WTC11 (cell line): ENCODE measurements at regions of chr15 and their contacts with region 1.

Region 1: GRCh38 chr15:97248376-97248775 is 712.1 kb upstream of the ARRDC4 start:
- DNase-seq: no peak
- ATAC-seq: no peak
- H3K4me3 Mint-ChIP-seq: no peak overlapping the region
- H3K27ac Mint-ChIP-seq: no peak overlapping the region
- H3K4me1 Mint-ChIP-seq: no peaks in the 10 kb centered on the region
- H3K27me3 Mint-ChIP-seq: no peaks in the 10 kb centered on the region
- CTCF ChIP-seq: no peak

Region 2: DNA sequence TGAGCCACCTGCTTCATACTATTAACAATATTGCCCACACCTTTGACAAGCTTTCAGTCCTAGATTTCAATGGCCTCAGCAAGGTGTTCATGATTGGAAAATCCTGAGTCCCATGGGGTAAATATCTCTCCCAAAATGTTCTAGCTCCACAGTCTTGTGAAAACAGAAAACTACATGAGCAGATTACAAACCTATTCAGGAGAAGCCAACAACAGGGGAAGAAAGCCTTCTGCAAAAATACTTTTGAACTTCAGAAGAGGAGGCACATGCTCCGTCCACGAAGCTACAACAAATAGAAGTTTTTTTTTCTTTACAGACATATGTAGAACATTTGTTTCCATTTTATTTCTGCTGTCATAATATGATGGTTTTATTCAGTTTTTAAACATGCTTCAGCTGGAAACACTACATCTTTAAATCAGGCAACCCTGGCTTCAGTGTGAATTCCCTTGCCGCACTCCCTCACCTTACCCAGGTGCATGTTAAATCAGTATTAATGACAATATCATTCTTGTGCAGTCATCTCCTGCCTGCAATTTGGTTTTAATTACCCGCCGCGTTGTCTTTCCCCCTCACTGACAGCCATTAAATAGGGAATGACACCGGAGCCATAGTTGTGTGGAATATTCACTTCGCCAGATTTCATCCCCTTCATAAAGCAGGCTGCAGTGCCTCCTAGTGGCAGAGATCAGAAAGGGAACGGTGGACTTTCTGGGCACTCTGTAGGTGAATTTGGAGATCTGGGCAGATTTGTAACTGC is 13.3 kb before region 1 on chr15:
- CTCF ChIA-PET with region 1: interaction called, 13 read pairs
- POLR2A ChIA-PET with region 1: no interaction called
- DNase-seq: peak; percentile 69
- ATAC-seq: peak; percentile 86
- H3K4me3 Mint-ChIP-seq: no peak overlapping the region
- H3K27ac Mint-ChIP-seq: no peak overlapping the region
- H3K4me1 Mint-ChIP-seq: peaks cover 2% of the 10 kb centered on the region
- H3K27me3 Mint-ChIP-seq: no peaks in the 10 kb centered on the region
- CTCF ChIP-seq: peak; percentile 89

Region 3: DNA sequence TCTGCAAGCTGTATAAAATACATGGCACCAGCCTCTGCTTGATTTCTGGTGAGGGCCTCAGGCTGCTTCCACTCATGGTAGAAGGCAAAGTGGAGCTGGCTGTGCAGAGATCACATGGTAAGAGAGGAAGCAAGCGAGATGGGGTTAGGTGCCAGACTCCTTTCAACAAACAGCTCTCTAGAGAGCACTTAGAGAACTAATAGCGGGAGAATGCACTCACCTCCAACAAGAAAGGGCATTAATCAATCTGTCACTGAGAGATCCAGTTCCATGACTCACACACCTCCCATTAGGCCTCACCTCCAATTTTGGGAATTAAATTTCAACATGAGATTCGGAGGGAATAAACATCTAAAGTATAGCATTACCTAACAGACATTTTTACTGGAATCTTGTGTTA is 68.0 kb after region 1 on chr15:
- CTCF ChIA-PET with region 1: no interaction called
- POLR2A ChIA-PET with region 1: no interaction called
- DNase-seq: no peak
- ATAC-seq: no peak
- H3K4me3 Mint-ChIP-seq: no peak overlapping the region
- H3K27ac Mint-ChIP-seq: no peak overlapping the region
- H3K4me1 Mint-ChIP-seq: peaks cover 12% of the 10 kb centered on the region
- H3K27me3 Mint-ChIP-seq: no peaks in the 10 kb centered on the region
- CTCF ChIP-seq: no peak

Region 4: GRCh38 chr15:97482521-97482920 is 234.1 kb after region 1 on chr15:
- CTCF ChIA-PET with region 1: interaction called, 18 read pairs
- POLR2A ChIA-PET with region 1: no interaction called
- DNase-seq: peak; percentile 45
- ATAC-seq: peak; percentile 87
- H3K4me3 Mint-ChIP-seq: no peak overlapping the region
- H3K27ac Mint-ChIP-seq: no peak overlapping the region
- H3K4me1 Mint-ChIP-seq: no peaks in the 10 kb centered on the region
- H3K27me3 Mint-ChIP-seq: no peaks in the 10 kb centered on the region; the same call in 1 of the 2 replicates
- CTCF ChIP-seq: no peak; the same call in 1 of the 2 replicates

Region 5: DNA sequence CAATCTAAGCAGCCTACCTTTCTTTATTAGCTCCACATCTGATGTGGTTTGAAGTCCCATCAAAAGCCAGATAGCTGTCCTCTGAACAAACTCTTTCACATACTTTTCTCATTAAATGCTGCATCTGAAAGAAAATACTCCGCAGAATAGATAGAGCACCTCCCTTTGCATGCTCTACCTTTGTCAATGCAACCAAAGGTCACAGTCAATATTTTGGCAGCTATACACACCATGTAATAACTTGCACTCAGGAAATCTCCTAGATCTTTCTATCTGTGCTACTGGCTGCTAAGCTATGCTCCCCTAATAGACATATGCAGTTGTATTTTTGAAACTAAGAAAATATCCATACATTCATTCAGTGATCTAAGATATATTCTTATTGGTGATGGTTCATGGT is 507.4 kb after region 1 on chr15:
- CTCF ChIA-PET with region 1: interaction called, 12 read pairs
- POLR2A ChIA-PET with region 1: no interaction called
- DNase-seq: no peak
- ATAC-seq: no peak
- H3K4me3 Mint-ChIP-seq: no peak overlapping the region
- H3K27ac Mint-ChIP-seq: no peak overlapping the region
- H3K4me1 Mint-ChIP-seq: 0 out of 2 replicates have a peak, but pooled peaks cover 3% of the 10 kb centered on the region
- H3K27me3 Mint-ChIP-seq: peaks cover 5% of the 10 kb centered on the region
- CTCF ChIP-seq: no peak